Activated naive CD4-positive, alpha-beta T cell treated with anti-CD3 and anti-CD28 coated beads, Interleukin-2, amount 10 ng/mL, durations not matched to agents 7 days and 5 days (primary cell): ENCODE measurements at regions of chr19 and their contacts with region 1.

Region 1: DNA sequence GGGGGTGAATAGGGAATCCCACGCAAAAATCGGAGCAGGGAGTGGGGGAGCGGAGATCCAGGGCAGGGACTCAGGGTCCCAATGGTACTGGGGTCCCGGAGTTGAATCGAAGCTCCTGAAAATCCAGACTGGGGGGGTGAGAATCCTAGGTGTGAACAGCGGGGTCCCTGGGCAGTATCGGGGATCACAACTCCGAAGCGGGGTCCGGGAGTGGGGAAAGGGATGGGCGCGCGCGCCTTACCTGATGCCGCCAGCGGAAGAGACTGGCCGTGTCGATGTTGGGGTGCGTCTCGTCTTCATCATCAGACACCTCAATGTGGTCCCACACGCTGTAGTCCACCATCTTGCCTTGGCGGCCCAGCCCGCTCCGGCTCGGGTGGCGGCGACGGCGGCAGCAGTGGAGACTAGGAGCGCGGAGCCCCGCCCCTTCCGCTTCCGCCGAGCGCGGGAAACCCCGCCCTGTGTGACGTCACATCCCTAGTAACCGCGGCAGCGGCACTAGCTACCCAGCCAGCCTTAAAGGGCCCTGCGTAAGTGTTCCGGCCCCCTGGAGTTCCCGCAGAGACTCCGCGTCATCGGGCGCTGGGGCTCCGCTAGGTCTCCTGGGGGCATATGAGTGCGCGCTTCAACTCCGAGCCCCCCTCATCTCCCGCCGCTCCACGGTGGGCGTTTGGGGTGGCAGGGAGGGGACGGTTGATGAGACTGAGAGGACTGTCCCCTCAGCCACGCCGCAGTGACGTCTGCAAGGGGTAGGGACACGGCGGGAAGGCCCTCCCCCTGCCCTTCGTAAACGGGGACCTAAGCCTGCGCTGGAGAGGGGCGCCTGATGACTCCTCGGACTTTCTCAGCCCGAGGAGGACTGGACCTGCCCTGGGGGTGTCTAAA is at the start of gene CDC37:
- DNase-seq: peak; percentile 98
- H3K4me3 Mint-ChIP-seq: peak within 1 kb of the TSS; percentile 87
- H3K27ac Mint-ChIP-seq: peak within 1 kb of the TSS; percentile 92
- H3K4me1 Mint-ChIP-seq: peaks cover 66% of the 10 kb centered on the region
- H3K27me3 Mint-ChIP-seq: no peaks in the 10 kb centered on the region

Region 2: GRCh38 chr19:10120538-10121189 is 282.7 kb before region 1 on chr19:
- CTCF ChIA-PET with region 1: no interaction called
- DNase-seq: no peak
- H3K4me3 Mint-ChIP-seq: no peak overlapping the region
- H3K27ac Mint-ChIP-seq: no peak overlapping the region
- H3K4me1 Mint-ChIP-seq: peaks cover 26% of the 10 kb centered on the region
- H3K27me3 Mint-ChIP-seq: no peaks in the 10 kb centered on the region

Region 3: GRCh38 chr19:10388957-10389356 is 14.4 kb before region 1 on chr19:
- CTCF ChIA-PET with region 1: interaction called, 33 read pairs
- DNase-seq: peak; percentile 87
- H3K4me3 Mint-ChIP-seq: no peak overlapping the region
- H3K27ac Mint-ChIP-seq: peak overlapping the region; percentile 12
- H3K4me1 Mint-ChIP-seq: no peaks in the 10 kb centered on the region
- H3K27me3 Mint-ChIP-seq: peaks cover 9% of the 10 kb centered on the region

Region 4: DNA sequence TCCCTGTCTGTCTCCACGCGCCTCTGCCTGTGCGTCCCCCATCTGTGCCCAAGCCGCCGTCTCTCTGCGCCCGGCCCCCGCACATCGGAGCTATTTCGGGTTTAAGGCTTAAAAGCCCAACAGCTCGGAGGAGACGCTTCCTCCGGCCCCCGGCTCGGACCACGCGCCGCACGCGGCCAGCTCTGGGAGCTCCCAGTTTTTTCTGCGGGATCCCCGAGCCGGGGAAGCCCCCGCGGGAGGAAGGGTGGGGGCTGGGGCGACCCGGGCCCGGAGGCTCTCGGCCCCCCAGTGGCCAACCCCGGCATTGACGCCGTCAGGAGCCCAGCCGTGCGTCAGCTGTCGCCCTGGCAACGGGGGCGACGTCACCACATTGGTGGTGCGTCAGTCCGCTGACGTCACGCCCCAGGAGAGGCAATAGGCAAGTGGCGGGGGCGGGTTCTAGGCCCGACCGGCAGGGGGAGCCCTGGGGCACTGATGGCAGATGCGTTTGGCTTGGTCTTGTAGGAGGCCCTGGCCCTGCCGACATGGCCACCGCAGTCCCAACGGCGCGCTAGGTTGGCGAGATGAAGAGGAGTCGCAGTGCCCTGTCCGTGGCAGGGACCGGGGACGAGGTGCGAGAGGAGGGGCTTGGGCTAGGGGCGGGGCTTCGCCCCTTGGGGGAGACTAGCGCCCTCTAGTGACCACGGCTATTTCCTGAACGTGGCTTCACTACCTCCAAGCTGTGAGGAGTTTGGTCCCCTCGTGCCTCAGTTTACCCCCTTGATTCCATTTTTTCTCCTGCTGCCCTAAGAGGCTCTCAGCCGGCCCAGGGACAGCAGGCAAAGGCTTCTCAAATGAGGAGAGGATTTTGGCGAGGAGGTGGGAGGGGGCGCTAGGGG is 13.2 kb after region 1 on chr19:
- CTCF ChIA-PET with region 1: interaction called, 382 read pairs
- DNase-seq: peak; percentile 97
- H3K4me3 Mint-ChIP-seq: peak overlapping the region; percentile 61
- H3K27ac Mint-ChIP-seq: peak overlapping the region; percentile 90
- H3K4me1 Mint-ChIP-seq: peaks cover 73% of the 10 kb centered on the region
- H3K27me3 Mint-ChIP-seq: peaks cover 56% of the 10 kb centered on the region

Region 5: GRCh38 chr19:10431943-10432735 is 28.8 kb after region 1 on chr19:
- CTCF ChIA-PET with region 1: interaction called, 382 read pairs
- DNase-seq: peak; percentile 77
- H3K4me3 Mint-ChIP-seq: peak overlapping the region; percentile 72
- H3K27ac Mint-ChIP-seq: no peak overlapping the region
- H3K4me1 Mint-ChIP-seq: peaks cover 69% of the 10 kb centered on the region
- H3K27me3 Mint-ChIP-seq: peaks cover 67% of the 10 kb centered on the region

Region 6: GRCh38 chr19:10557603-10558197 is 154.3 kb after region 1 on chr19:
- CTCF ChIA-PET with region 1: no interaction called
- DNase-seq: no peak
- H3K4me3 Mint-ChIP-seq: no peak overlapping the region
- H3K27ac Mint-ChIP-seq: peak overlapping the region; percentile 33
- H3K4me1 Mint-ChIP-seq: peaks cover 44% of the 10 kb centered on the region
- H3K27me3 Mint-ChIP-seq: no peaks in the 10 kb centered on the region